ENCODE measurements at regions of chr4 and their contacts with region 1.

Region 1: GRCh38 chr4:26081795-26082498 is 167.9 kb downstream of the SMIM20 start:
- DNase-seq: peak; percentile 69
- H3K4me3 Mint-ChIP-seq: no peak overlapping the region
- H3K27ac Mint-ChIP-seq: no peak overlapping the region
- H3K4me1 Mint-ChIP-seq: peaks cover 25% of the 10 kb centered on the region
- H3K27me3 Mint-ChIP-seq: no peaks in the 10 kb centered on the region
- CTCF ChIP-seq: peak; percentile 57

Region 2: DNA sequence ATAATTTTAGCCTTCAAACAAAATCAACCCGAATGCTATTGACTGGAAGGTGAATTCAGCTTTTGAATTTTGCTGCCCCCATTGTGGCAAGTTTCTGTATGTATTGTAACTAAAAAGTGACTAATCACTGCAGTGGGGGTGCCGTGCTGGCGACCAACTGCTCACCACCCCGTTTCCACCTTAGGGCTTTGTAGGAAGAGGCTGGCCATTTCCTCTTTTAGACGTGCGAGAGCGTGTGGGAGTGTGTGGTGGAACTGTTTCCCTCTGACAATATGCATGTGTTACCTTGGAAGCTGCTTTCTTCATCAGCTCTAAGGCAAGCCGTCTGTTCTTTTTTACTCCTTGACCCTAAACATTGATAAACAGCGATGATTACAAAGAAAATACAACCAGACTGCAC is 298.0 kb before region 1 on chr4:
- CTCF ChIA-PET with region 1: no interaction called
- POLR2A ChIA-PET with region 1: no interaction called
- intact Hi-C with region 1: no loop called
- DNase-seq: no peak
- H3K4me3 Mint-ChIP-seq: no peak overlapping the region
- H3K27ac Mint-ChIP-seq: no peak overlapping the region
- H3K4me1 Mint-ChIP-seq: no peaks in the 10 kb centered on the region
- H3K27me3 Mint-ChIP-seq: no peaks in the 10 kb centered on the region
- CTCF ChIP-seq: no peak

Region 3: DNA sequence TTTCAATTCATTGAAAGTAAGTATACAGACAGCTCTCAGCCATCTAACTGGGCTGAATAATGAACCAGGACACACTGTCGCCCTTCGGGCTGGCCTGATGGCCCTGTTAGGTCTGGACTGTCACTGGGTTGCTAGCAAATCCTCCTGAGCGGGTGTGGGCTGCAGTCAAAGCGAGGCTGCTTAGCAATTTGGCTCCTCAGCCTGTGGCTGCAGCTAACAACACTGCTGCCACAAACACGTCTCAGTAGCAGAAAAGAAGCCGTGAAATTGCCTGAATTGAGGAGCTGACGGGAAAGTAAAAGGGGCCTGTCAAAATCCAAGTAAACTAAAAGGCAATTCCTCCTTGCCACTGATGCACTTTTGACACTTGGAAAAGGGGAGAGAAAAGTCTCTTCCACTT is 95.1 kb before region 1 on chr4:
- CTCF ChIA-PET with region 1: interaction called, 27 read pairs
- POLR2A ChIA-PET with region 1: no interaction called
- intact Hi-C with region 1: loop called (anchors 5 kb)
- DNase-seq: no peak
- H3K4me3 Mint-ChIP-seq: no peak overlapping the region
- H3K27ac Mint-ChIP-seq: no peak overlapping the region
- H3K4me1 Mint-ChIP-seq: no peaks in the 10 kb centered on the region
- H3K27me3 Mint-ChIP-seq: no peaks in the 10 kb centered on the region
- CTCF ChIP-seq: no peak

Region 4: DNA sequence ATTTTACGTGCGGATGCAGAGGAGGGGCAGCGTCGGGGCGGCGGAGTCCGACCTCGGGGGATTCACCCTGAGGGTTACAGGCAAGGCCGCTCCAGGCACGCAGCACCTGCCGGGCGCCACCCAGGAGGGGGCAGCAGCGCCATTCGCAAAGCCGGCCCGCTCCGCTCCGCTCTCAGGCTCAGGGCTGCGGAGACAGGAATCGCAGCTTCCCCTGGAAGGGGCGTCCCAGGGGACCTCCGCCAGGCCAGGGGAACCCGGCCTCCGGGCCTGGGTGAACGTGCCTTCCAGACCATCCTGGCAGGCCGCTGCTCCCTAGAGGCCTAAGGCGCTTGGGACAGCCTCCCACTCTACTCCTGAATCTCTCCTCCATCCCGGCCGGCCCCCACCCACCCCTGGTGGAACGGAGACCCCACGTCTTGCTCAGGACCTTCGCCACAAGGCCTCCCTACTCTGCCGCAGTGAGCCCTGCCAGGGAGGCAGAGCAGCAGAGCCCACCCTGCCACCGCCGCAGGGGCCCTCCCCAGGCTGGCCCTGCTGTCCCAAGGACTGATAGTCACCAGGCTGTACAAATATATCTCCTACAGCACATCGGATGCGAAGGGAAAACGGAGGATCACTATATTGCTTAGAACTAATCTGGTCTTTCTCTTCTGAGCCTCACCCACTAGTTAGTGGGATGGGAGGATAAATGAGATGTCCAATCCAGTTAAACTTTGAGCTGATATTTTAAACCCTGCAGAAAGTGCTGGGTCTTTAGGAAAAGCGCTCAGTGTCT is 53.0 kb before region 1 on chr4:
- CTCF ChIA-PET with region 1: no interaction called
- POLR2A ChIA-PET with region 1: no interaction called
- intact Hi-C with region 1: no loop called
- DNase-seq: no peak
- H3K4me3 Mint-ChIP-seq: no peak overlapping the region
- H3K27ac Mint-ChIP-seq: peak overlapping the region; percentile 59
- H3K4me1 Mint-ChIP-seq: peaks cover 6% of the 10 kb centered on the region
- H3K27me3 Mint-ChIP-seq: no peaks in the 10 kb centered on the region
- CTCF ChIP-seq: peak; percentile 22

Region 5: DNA sequence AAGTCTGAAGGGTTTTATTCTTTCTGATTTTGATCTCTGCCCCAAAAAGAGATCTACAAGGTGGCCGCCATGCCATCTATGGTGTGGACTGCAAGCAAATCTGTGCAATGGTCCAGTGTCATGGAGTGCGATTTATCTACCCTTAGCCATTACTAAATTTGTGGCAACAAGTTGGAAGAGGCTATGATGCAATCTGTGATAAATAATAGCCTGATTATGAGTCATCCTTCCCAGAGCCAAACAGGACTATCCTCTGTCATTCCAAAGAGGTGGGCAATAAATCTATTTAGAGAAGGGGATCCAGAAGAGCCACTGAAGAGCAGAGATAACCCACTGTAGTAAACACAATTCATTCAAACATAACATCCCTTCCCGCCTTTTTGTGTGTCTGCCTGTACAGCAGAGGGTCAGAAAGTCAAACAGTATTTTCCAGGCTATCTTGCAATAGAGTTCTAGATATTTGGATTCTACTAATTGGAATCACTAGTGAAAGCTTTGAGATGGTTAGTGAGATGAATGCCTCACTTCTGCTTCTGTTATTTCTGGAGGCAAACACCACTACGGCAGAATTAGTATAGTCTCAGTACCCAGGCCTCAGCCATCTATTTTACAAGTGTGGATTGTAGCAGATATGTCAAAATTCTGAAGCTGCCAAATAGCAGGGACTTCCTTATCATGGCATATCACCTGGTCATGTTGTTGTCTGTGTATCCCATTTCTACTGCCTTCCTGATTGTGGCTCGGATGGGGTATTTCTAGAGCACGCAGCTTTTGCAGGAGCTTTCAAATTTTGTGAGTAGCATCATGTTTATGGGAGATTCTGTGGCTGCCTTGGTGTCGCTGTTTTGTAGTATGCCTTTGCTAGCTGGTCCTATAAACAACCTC is 24.1 kb after region 1 on chr4:
- CTCF ChIA-PET with region 1: interaction called, 25 read pairs
- POLR2A ChIA-PET with region 1: no interaction called
- intact Hi-C with region 1: no loop called
- DNase-seq: peak; percentile 60
- H3K4me3 Mint-ChIP-seq: no peak overlapping the region
- H3K27ac Mint-ChIP-seq: no peak overlapping the region
- H3K4me1 Mint-ChIP-seq: peaks cover 18% of the 10 kb centered on the region
- H3K27me3 Mint-ChIP-seq: no peaks in the 10 kb centered on the region
- CTCF ChIP-seq: no peak

Region 6: DNA sequence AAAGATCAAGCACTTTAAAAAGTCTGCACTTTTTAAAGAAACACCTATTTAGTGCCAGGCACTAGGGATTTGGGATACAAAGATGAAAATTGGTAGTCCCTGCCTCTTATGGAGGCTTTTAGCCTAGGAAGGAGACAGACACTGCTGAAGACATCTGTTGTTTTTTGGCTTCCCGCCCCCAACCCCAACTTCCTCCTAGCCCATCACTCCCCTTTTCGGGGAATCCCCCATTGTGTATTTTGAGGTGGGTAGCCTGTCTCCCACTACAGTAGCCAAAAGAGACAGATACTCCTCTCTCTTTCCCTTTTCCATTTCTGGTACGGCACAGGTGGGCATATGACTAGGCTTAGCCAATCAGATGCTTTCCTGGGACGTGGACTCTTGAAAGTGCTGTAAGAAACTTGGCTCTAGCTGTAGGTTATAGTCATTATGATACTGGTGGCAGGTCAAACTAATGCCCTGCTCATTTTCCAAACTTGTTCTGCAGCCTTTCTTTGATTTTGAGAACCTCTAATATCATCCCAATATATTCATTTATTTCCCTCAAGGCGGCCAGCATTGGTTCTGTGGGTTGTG is 44.3 kb after region 1 on chr4:
- CTCF ChIA-PET with region 1: interaction called, 38 read pairs
- POLR2A ChIA-PET with region 1: interaction called, 34 read pairs
- intact Hi-C with region 1: no loop called
- DNase-seq: no peak
- H3K4me3 Mint-ChIP-seq: no peak overlapping the region
- H3K27ac Mint-ChIP-seq: no peak overlapping the region
- H3K4me1 Mint-ChIP-seq: peaks cover 21% of the 10 kb centered on the region
- H3K27me3 Mint-ChIP-seq: no peaks in the 10 kb centered on the region
- CTCF ChIP-seq: no peak

Region 7: GRCh38 chr4:26319467-26319948 is 237.6 kb after region 1 on chr4:
- CTCF ChIA-PET with region 1: interaction called, 8 read pairs
- POLR2A ChIA-PET with region 1: interaction called, 24 read pairs
- intact Hi-C with region 1: loop called (anchors 1 kb)
- DNase-seq: peak; percentile 100
- H3K4me3 Mint-ChIP-seq: peak overlapping the region; percentile 87
- H3K27ac Mint-ChIP-seq: peak overlapping the region; percentile 94
- H3K4me1 Mint-ChIP-seq: peaks cover 16% of the 10 kb centered on the region
- H3K27me3 Mint-ChIP-seq: no peaks in the 10 kb centered on the region
- CTCF ChIP-seq: no peak

Region 8: DNA sequence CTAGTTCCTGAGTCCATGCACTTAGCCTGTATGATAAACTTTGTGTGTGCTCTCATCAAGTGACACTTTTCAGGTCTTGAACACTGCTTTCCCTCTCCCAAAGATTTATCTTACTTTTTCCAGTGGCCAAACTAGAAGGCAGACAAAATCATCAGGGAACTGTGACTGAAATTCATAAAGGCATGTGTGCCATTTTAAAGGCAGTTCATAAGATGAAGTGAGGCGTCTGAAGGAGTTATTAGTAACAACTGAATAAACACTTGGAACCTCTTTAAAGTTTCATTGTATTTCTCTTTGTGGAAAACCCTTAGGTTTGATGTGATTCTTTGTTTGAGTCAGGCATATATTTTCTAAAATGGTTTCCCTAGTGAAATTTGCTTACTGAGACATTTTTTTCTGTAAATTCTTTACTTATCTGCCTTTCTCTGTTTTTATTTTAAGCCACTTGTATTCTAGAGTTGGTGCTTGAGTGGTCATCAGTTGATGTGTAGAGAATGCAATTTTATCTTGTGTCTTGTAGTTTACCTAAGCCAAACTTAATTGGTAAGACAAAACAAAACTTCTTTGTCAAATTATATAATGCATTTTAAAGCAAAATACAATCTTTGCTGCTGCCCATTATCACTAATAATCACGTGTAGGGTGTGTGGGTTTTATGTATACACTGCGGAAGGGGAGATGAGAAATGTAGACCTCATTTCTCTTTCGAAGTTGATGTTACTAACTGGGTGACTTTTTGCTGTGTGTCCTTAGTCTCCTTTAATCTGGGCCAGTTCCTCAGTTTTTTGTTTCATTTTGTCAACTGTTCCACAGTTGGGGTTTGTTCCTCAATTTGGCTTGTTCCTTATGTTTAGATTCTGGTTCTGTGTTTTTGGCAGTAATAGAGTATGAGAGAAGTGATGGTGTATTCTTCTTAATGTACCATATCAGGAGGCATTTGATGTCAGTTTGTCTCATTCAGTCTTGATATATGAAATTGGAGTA is 295.7 kb after region 1 on chr4:
- CTCF ChIA-PET with region 1: no interaction called
- POLR2A ChIA-PET with region 1: no interaction called
- intact Hi-C with region 1: no loop called
- DNase-seq: no peak
- H3K4me3 Mint-ChIP-seq: no peak overlapping the region
- H3K27ac Mint-ChIP-seq: no peak overlapping the region
- H3K4me1 Mint-ChIP-seq: peaks cover 2% of the 10 kb centered on the region
- H3K27me3 Mint-ChIP-seq: no peaks in the 10 kb centered on the region
- CTCF ChIP-seq: no peak

Region 9: DNA sequence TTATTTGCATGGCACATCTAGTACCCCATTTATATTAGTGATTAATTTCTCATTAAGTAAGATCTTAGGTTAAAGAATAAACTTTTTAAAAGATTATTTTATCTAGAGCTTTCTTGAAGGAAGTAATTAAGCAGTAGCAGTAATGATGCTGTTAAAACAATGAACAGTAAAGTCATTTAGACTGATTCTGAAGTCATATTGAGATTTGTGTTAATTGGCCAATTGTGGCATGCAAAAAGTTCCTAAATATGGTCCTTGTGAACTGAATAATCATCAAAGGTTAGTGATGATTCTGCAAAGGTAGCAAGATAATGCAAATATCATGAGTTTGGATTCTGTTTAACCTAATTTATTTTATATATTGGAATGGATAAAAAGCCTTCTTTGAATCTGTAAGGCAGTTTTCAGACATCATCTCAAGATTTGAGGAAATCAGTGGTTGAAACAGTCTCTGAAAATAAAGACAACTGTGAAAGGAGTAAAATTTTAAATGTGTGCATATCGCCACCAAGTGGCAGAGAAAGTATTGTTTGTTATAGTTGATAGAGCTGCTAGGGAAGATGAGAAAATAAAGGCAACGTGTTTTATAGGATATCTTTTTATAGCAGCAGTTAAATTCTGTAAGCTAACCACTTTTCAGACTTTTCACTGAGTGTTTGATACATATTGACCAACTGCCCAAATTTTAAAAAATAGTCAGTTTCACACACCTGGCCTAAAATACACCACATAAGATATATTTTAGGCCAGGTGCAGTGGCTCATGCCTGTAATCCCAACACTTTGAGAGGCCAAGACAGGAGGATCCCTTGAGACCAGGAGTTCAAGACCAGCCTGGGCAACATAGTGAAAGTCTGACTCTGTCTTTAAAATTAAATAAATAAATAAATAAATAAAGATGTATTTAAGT is 328.7 kb after region 1 on chr4:
- CTCF ChIA-PET with region 1: interaction called, 5 read pairs
- POLR2A ChIA-PET with region 1: no interaction called
- intact Hi-C with region 1: loop called (anchors 1 kb)
- DNase-seq: peak; percentile 63
- H3K4me3 Mint-ChIP-seq: no peak overlapping the region
- H3K27ac Mint-ChIP-seq: no peak overlapping the region
- H3K4me1 Mint-ChIP-seq: peaks cover 10% of the 10 kb centered on the region
- H3K27me3 Mint-ChIP-seq: no peaks in the 10 kb centered on the region
- CTCF ChIP-seq: peak; percentile 48